Activated naive CD4-positive, alpha-beta T cell treated with anti-CD3 and anti-CD28 coated beads for 36 hours (primary cell): ENCODE measurements at regions of chr13 and their contacts with region 1.

Region 1: DNA sequence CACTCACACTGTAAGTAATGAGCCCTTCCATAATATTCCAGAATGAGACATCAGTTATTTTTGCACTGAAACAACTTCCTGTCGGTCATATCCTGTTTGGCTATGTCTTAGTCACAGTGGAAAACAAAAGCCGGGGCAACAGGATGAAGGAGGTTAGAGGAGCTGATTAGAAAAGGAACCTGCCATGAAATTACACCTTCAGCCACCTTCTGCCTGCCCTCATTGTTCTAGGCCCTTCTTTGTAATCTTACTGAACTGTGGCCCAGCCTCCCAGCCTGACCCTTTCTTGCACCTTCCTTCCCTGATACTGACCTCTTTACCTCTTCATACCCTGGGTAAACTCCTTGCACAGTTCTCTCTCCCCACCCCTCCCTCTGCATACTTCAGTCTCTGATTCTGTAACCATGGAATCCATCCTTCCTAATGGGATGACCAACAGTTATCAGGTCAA is 67.3 kb downstream of the DOCK9 start:
- DNase-seq: peak; percentile 72
- H3K4me3 Mint-ChIP-seq: peak overlapping the region; percentile 14
- H3K27ac Mint-ChIP-seq: peak overlapping the region; percentile 90
- H3K4me1 Mint-ChIP-seq: peaks cover 63% of the 10 kb centered on the region
- H3K27me3 Mint-ChIP-seq: no peaks in the 10 kb centered on the region

Region 2: DNA sequence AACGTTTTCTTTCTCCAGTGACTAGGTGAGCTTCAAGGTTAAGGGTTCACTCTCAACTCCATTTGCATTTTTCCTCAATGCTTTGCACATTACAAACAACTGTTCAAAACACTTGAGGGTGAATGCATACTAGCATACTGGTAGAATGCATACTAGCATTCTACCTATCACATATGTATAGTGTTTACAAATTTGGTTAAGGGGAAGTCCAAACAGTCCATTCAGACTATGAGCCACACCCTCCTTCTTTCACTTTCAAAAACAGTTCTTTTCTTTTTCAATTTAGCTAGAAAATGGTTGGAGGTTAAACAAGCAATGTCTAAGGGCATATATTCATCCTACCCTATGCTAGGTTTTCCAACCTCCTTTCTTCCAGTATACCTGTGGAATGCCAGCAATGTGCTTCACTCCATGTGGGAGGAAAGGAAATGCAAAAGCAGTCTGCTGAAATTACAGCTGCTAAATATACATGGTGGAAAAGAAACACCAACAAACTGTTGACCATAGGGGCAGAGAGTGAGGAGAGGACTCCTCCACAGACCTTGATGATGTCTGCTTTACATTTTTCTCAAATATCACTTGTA is 35.3 kb before region 1 on chr13:
- CTCF ChIA-PET with region 1: interaction called, 6 read pairs
- intact Hi-C with region 1: loop called (anchors 2 kb)
- DNase-seq: no peak
- H3K4me3 Mint-ChIP-seq: no peak overlapping the region
- H3K27ac Mint-ChIP-seq: peak overlapping the region; percentile 10
- H3K4me1 Mint-ChIP-seq: peaks cover 23% of the 10 kb centered on the region
- H3K27me3 Mint-ChIP-seq: no peaks in the 10 kb centered on the region

Region 3: GRCh38 chr13:98998831-98999638 is 88.5 kb after region 1 on chr13:
- CTCF ChIA-PET with region 1: no interaction called
- intact Hi-C with region 1: loop called (anchors 1 kb)
- DNase-seq: peak; percentile 66
- H3K4me3 Mint-ChIP-seq: no peak overlapping the region
- H3K27ac Mint-ChIP-seq: peak overlapping the region; percentile 67
- H3K4me1 Mint-ChIP-seq: peaks cover 92% of the 10 kb centered on the region
- H3K27me3 Mint-ChIP-seq: no peaks in the 10 kb centered on the region

Region 4: DNA sequence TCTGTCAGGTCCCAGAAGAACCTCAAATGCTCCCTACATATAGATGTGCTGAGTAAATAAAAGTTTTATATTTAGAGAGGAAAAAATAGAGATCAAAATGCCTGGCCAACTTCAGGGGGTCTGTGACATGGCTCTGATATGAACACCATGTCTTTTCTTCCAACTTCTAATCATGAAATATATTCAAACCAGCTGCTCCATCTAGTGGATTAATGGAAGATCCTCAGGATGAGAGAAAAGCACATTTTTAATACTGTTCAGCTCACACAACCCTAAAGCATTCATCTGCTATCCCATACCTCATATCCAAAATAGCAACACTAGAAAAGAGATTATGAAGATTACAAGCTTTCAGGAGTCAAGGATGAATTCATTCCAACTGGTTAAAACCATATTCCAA is 123.3 kb after region 1 on chr13:
- CTCF ChIA-PET with region 1: interaction called, 11 read pairs
- intact Hi-C with region 1: no loop called
- DNase-seq: no peak
- H3K4me3 Mint-ChIP-seq: no peak overlapping the region
- H3K27ac Mint-ChIP-seq: no peak overlapping the region
- H3K4me1 Mint-ChIP-seq: peaks cover 45% of the 10 kb centered on the region
- H3K27me3 Mint-ChIP-seq: no peaks in the 10 kb centered on the region

Region 5: GRCh38 chr13:99322297-99323103 is 412.0 kb after region 1 on chr13:
- CTCF ChIA-PET with region 1: no interaction called
- intact Hi-C with region 1: loop called (anchors 10 kb)
- DNase-seq: peak; percentile 63
- H3K4me3 Mint-ChIP-seq: peak overlapping the region; percentile 56
- H3K27ac Mint-ChIP-seq: peak overlapping the region; percentile 87
- H3K4me1 Mint-ChIP-seq: peaks cover 75% of the 10 kb centered on the region
- H3K27me3 Mint-ChIP-seq: no peaks in the 10 kb centered on the region